ENCODE measurements at regions of chr1 and their contacts with region 1.

Region 1: DNA sequence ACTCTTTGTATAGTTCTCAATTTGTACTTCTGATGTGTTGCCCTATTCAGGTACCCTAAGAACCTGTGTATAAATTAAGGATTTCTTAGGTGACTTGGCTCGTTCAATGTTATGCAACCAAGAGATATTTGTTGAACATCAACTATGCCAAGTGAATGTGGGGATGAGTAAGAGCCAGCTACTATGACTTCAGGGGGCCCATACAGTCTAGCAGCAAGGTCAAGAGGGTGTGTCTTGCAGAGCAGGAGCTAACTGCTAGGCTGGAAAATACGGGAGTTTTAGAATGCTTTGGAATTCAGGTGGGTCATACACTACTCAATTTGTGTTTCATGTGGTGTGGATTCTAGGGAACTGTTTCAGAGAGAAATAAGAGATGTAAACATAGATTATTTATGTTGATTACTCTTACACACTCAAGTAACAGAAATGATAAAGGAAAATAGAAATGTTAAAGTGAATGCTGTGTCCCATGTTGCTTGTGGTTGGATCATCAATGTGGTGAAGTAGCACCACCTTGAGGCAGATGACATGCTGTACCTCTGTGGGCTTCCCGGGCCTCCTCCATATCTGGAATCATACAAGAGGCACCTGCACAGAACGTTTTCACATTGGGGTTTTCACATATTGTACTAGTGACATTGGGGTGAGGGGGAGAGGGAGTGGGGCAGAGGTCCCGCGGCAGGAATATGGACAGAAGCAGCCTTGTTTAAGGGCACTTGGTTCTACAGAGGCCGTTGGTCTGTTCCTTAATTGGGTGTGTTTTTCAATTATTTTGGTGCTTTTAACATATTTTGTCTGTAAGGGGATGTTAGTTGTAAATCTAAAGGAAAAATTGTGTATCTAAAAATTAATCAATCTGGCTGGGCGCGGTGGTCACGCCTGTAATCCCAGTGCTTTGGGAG is 12.4 kb downstream of the ARPC5 start:
- DNase-seq: no peak
- H3K4me3 ChIP-seq: no peak overlapping the region
- H3K27ac ChIP-seq: no peak overlapping the region
- H3K4me1 ChIP-seq: no peaks in the 10 kb centered on the region
- H3K27me3 ChIP-seq: no peaks in the 10 kb centered on the region
- CTCF ChIP-seq: peak in 2 of 3 donors; percentile 40 to 41
- POLR2A ChIP-seq: no peak

Region 2: DNA sequence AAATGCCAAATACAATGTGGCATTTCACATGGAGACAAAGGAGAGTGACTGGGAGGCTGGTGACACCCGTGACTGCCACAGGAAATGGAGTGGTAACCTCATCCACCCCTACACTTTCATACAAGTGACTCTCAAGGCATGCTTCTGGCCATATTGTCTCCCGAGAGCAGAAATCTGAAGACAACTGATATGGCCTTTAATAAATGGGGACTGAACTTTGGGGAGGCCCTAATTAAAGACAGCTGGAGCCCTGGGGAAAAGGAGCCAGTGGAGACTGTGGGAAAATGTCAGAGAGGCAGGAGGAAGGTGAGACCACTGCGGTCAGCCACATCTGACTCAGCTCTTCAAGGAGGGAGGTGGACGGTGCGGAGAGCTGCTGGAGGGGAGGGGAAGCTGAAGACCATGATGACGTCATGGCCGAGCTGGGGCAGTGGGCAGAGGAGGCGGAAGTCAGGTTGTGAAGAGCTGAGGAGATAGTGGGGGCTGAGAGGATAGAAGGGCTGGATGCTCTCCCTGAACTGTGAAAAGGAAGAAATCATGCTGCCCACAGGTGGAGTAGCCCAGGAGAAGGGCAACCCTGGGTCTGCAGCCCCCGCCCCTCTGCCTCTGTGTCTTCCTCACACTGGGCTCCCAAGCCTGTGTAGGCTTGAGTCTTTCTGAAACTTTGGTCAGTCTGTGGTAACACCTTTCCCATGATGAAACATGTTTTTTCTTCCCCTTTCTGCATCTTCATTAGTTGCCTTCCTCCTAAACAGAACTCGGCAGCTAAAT is 18.9 kb before region 1 on chr1:
- intact Hi-C with region 1: loop called (anchors 1 kb)
- DNase-seq: no peak
- H3K4me3 ChIP-seq: no peak overlapping the region
- H3K27ac ChIP-seq: peak overlapping the region in 1 of 2 donors; percentile 49
- H3K4me1 ChIP-seq: no peaks in the 10 kb centered on the region
- H3K27me3 ChIP-seq: no peaks in the 10 kb centered on the region
- CTCF ChIP-seq: no peak
- POLR2A ChIP-seq: no peak

Measured in breast epithelium (tissue), 4 donors.